CD14-positive monocyte (primary cell): ENCODE measurements at regions of chr12 and their contacts with region 1.

Region 1: DNA sequence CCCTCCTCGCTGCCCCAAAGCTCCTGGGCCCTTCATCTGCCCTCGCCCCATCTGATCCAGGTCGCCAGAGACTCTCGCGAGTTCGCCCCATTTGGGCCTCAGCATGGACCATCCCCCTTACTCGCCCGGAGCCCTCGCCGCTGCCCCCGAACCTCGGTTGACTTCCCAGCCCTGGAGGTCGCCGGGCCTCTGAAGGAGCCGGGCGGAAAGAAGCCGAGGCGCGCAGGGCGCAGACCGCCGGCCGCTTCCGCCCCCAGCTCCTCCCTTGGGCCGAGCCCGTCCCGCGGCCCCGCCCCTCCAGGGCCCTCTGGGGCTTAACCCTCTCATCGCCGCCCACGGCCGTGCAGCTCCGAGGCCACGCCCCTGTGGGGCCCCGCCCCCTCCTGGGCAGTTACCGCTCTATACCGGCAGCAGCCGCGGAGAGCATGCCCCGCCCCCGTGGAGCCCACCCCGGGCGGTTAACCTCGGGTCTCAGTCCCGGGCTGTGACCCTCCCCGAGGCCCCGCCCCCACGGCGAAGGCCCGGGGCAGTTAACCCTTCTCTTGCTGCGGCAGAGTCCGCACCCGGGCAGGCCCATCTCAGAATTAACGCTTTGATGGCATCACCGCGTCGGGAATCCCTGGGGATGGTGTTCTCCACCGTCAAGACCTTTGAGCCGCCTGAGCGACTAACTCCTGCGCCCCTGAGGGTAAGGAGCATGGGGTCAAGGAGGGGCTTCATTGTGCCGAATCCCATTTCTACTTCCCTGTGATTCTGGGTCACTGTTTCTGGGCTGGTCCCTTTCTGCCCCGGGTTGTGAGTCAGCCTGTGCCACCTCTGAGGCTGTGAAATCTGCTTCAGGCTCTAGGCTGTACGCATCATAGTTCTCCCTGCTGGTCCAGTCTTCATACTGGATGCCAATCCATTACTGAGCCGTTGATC is at the start of gene SPSB2:
- DNase-seq: peak; percentile 92 to 95 (median 93)
- H3K4me3 ChIP-seq: peak within 1 kb of the TSS; percentile 62 to 92 (median 87)
- H3K4me3 Mint-ChIP-seq: peak within 1 kb of the TSS; percentile 87 to 92
- H3K27ac ChIP-seq: peak within 1 kb of the TSS; percentile 81 to 95
- H3K27ac Mint-ChIP-seq: peak within 1 kb of the TSS; percentile 84 to 95 (median 94)
- H3K4me1 ChIP-seq: peaks cover 36 to 58% of the 10 kb centered on the region in 2 donors
- H3K4me1 Mint-ChIP-seq: peaks cover 57% of the 10 kb centered on the region
- H3K27me3 ChIP-seq: no peaks in the 10 kb centered on the region
- H3K27me3 Mint-ChIP-seq: peaks cover 0 to 3% (median 0%) of the 10 kb centered on the region in 3 donors
- CTCF ChIP-seq: no peak
- polyA plus RNA-seq, gene SPSB2: 4.7 to 6.9 (median 6.6) TPM

Region 2: GRCh38 chr12:6067152-6067916 is 806.0 kb before region 1 on chr12:
- intact Hi-C with region 1: no loop called
- DNase-seq: no peak
- H3K4me3 ChIP-seq: no peak overlapping the region
- H3K4me3 Mint-ChIP-seq: no peak overlapping the region
- H3K27ac ChIP-seq: no peak overlapping the region
- H3K27ac Mint-ChIP-seq: peak overlapping the region in 2 of 7 donors; percentile 7 to 75
- H3K4me1 ChIP-seq: peaks cover 7 to 9% of the 10 kb centered on the region in 2 donors
- H3K4me1 Mint-ChIP-seq: peaks cover 35% of the 10 kb centered on the region
- H3K27me3 ChIP-seq: no peaks in the 10 kb centered on the region
- H3K27me3 Mint-ChIP-seq: peaks cover 7 to 16% (median 8%) of the 10 kb centered on the region in 3 donors
- CTCF ChIP-seq: peak; percentile 25

Region 3: DNA sequence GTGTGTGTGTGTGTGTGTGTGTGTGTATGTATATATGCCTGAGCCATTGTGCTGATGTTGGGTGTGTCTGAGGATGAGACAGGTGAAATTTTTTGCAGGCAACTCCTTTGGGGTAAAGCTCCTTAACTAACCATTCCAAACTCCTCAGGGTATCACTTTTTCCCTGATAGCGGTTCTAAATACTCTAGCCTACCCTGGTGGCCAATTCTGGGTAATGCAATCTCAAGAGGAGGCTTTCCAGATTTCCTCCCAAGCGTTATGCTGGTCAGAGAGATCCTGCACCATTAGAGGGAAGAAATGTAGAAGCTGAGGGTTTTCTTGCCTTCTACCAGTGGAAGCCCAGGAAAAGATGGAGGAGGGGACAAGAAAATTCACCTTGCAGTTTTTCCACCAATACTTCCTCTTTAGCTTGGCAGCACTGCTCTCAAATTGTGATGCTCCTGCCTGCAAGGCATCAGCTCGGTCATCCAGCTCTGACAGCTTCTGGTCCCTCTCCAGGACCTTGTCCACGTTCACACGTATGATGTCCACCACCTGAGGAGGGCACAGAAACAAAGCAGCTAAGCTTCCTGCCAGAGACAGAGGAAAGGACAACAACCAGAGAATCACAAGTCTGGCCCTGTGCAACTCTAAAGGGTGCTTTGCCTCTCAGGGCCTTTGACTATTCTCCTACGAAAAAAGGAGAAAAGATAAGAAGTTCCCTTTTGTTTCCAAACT is 407.7 kb before region 1 on chr12:
- intact Hi-C with region 1: no loop called
- DNase-seq: peak; percentile 44 to 69 (median 67)
- H3K4me3 ChIP-seq: no peak overlapping the region
- H3K4me3 Mint-ChIP-seq: no peak overlapping the region
- H3K27ac ChIP-seq: no peak overlapping the region
- H3K27ac Mint-ChIP-seq: peak overlapping the region in 3 of 7 donors; percentile 21 to 26 (median 26)
- H3K4me1 ChIP-seq: peaks cover 48 to 59% of the 10 kb centered on the region in 2 donors
- H3K4me1 Mint-ChIP-seq: peaks cover 70% of the 10 kb centered on the region
- H3K27me3 ChIP-seq: no peaks in the 10 kb centered on the region
- H3K27me3 Mint-ChIP-seq: peaks cover 0 to 2% (median 1%) of the 10 kb centered on the region in 3 donors
- CTCF ChIP-seq: peak; percentile 85

Region 4: DNA sequence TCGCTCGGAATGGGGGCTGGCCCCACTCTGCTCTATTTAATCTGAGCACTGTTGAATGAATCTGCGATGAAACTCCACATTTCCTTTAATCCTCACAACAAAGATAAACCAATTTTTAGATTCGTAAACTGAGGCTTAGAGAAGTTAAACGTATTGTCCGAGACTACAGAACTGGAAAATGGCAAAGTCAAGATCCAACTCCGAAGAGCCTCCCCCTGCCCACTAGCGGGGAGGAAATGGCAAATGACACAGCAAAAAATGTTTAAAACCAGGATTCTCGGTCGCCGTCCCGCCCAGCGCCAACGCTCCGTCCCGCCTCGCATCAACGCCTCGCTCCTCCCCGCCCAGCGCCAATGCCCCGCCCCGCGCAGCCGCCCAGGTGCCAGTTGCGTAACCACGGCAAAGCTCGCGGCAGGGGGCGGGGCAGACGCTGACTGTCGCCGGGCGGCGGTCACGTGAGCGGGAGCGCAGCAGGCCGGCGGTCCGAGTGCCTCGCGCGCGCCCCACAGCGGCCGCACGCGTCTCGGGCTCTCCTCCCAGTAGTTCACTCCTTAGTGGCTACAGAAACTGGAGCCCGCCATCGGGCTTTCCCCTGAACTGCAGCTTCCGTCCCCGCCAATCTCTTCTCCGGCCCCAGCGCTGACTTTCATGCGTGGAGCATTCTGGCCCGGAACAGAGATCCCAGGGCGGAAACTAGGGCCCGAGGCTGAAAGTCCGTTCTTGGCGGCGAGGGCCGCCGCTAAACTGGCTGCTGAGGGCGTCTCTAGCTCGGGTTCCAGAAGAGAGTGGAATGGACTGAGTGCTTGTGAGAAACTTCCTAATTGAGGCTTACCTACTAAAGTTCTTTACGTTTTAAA is 17.7 kb after region 1 on chr12:
- intact Hi-C with region 1: loop called (anchors 1 to 2 kb)
- DNase-seq: peak; percentile 97 to 98 (median 97)
- H3K4me3 ChIP-seq: peak overlapping the region; percentile 40 to 72 (median 59)
- H3K4me3 Mint-ChIP-seq: peak overlapping the region; percentile 75 to 86
- H3K27ac ChIP-seq: peak overlapping the region; percentile 86 to 88
- H3K27ac Mint-ChIP-seq: peak overlapping the region; percentile 85 to 96 (median 94)
- H3K4me1 ChIP-seq: peaks cover 50 to 59% of the 10 kb centered on the region in 2 donors
- H3K4me1 Mint-ChIP-seq: peaks cover 52% of the 10 kb centered on the region
- H3K27me3 ChIP-seq: no peaks in the 10 kb centered on the region
- H3K27me3 Mint-ChIP-seq: peaks cover 0 to 1% (median 0%) of the 10 kb centered on the region in 3 donors
- CTCF ChIP-seq: peak; percentile 82

Region 5: DNA sequence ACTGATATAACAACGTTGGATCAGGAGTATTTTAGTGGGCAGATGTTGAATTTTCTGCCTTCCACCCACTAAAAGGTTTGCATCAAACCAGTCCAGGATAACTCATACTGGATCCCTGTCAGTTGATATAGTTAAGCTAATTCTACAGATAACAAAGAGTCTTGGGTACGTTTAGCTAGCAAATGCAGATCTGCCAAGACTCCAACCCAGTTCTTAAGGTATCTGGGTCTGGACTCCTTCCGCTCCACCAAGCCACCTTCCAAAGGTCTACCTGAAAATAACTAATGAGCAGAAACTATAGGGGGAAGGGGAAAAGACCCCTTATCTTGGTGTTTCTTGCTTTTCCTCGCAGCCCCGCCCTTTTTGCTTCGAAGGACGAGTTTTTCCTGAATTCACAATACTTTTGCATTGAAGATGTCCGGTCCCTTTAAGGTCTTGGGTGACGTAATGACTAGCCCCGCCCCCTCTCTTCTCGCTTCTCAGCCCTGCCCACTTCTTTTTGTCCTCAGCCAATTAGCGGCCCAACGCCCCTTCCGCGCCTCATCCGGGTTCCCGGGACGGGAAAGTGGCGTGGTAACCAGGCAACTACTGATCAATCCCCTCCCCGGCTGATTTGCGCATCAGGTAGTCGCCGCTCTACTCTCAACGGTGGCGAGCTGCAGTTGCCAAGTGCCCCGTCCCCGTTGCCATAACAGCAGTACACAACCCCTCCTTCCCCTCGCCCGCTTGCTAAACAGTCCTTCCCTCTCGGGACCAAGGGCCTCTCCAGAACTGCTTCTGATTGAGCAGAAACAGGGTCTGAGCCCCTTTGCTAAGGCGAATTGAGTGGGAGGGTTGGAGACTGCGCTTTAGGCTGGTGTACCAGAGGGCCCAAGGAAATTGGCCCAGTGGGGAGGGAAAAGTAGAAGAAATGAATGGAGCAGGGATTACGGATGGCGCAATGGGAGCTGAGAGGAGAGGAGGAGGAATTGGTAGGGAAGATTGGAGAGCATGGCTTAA is 31.2 kb after region 1 on chr12 and contains the start of gene LRRC23:
- intact Hi-C with region 1: loop called (anchors 1 to 5 kb)
- DNase-seq: peak; percentile 89 to 93 (median 92)
- H3K4me3 ChIP-seq: peak within 1 kb of the TSS; percentile 77 to 89 (median 89)
- H3K4me3 Mint-ChIP-seq: no peak within 1 kb of the TSS
- H3K27ac ChIP-seq: peak within 1 kb of the TSS; percentile 41 to 84
- H3K27ac Mint-ChIP-seq: peak within 1 kb of the TSS in 1 of 7 donors; percentile 73
- H3K4me1 ChIP-seq: peaks cover 20 to 23% of the 10 kb centered on the region in 2 donors
- H3K4me1 Mint-ChIP-seq: peaks cover 9% of the 10 kb centered on the region
- H3K27me3 ChIP-seq: no peaks in the 10 kb centered on the region
- H3K27me3 Mint-ChIP-seq: no peaks in the 10 kb centered on the region
- CTCF ChIP-seq: no peak
- polyA plus RNA-seq, gene LRRC23: 4.9 to 6.8 (median 5.1) TPM

Region 6: DNA sequence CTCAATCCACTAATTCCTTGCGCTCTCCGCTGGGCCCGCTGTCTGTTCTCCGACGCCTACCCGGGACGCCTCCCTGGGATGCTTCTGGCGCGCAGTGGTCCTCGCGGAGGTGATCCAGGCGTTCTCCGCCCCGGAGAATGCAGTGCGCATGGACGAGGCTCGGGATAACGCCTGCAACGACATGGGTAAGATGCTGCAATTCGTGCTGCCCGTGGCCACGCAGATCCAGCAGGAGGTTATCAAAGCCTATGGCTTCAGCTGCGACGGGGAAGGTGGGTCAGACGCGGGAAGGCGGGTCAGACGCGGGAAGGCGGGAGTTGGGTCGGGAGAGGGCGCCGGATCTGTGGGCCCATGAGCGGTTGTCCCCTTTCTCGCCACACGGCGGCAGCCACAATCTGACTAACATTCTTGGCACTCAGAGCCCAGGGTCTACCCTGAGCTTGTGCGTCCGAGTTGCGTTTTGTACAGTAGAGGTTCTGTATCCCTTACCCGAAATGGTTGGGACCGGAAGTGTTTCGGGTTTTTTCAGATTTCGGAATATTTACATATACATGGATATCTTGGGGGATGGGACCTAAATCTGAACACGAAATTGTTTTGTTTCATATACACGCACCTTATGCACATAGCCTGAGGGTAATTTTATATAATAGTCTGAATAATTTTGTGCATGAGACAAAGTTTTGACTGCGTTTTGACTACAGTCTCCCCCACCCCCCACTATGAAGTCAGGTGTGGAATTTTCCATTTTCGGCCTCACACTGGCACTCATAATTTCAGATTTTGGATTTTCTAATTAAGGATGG is 71.2 kb after region 1 on chr12:
- intact Hi-C with region 1: loop called in 1 of 2 experiments (anchors 5 kb)
- DNase-seq: peak; percentile 82 to 90 (median 90)
- H3K4me3 ChIP-seq: peak overlapping the region; percentile 3 to 76 (median 48)
- H3K4me3 Mint-ChIP-seq: peak overlapping the region; percentile 82 to 91
- H3K27ac ChIP-seq: peak overlapping the region; percentile 76 to 89
- H3K27ac Mint-ChIP-seq: peak overlapping the region; percentile 94 to 99 (median 98)
- H3K4me1 ChIP-seq: peaks cover 62 to 68% of the 10 kb centered on the region in 2 donors
- H3K4me1 Mint-ChIP-seq: peaks cover 65% of the 10 kb centered on the region
- H3K27me3 ChIP-seq: no peaks in the 10 kb centered on the region
- H3K27me3 Mint-ChIP-seq: peaks cover 0 to 2% (median 0%) of the 10 kb centered on the region in 3 donors
- CTCF ChIP-seq: peak; percentile 81